ENCODE measurements at regions of chr12 and their contacts with region 1.

Region 1: GRCh38 chr12:109154451-109155438 is 38.4 kb downstream of the ACACB start:
- DNase-seq: peak; percentile 85
- H3K4me3 Mint-ChIP-seq: peak overlapping the region; percentile 90
- H3K27ac Mint-ChIP-seq: peak overlapping the region; percentile 81
- H3K4me1 Mint-ChIP-seq: peaks cover 17% of the 10 kb centered on the region
- H3K27me3 Mint-ChIP-seq: no peaks in the 10 kb centered on the region

Region 2: GRCh38 chr12:108731105-108731865 is 423.5 kb before region 1 on chr12 and contains the start of gene CORO1C:
- CTCF ChIA-PET with region 1: no interaction called
- intact Hi-C with region 1: loop called (anchors 1 kb)
- DNase-seq: peak; percentile 96
- H3K4me3 Mint-ChIP-seq: peak within 1 kb of the TSS; percentile 89
- H3K27ac Mint-ChIP-seq: peak within 1 kb of the TSS; percentile 87
- H3K4me1 Mint-ChIP-seq: peaks cover 29% of the 10 kb centered on the region
- H3K27me3 Mint-ChIP-seq: no peaks in the 10 kb centered on the region
- total RNA-seq, gene CORO1C: 36.4 to 43.7 TPM

Region 3: GRCh38 chr12:108856428-108857157 is 298.2 kb before region 1 on chr12:
- CTCF ChIA-PET with region 1: no interaction called
- intact Hi-C with region 1: loop called (anchors 1 kb)
- DNase-seq: peak; percentile 74
- H3K4me3 Mint-ChIP-seq: peak overlapping the region; percentile 92
- H3K27ac Mint-ChIP-seq: peak overlapping the region; percentile 75
- H3K4me1 Mint-ChIP-seq: peaks cover 40% of the 10 kb centered on the region
- H3K27me3 Mint-ChIP-seq: no peaks in the 10 kb centered on the region

Region 4: GRCh38 chr12:109052414-109053323 is 102.1 kb before region 1 on chr12 and contains the start of gene USP30:
- CTCF ChIA-PET with region 1: no interaction called
- intact Hi-C with region 1: loop called (anchors 2 kb)
- DNase-seq: peak; percentile 87
- H3K4me3 Mint-ChIP-seq: peak within 1 kb of the TSS; percentile 84
- H3K27ac Mint-ChIP-seq: peak within 1 kb of the TSS; percentile 96
- H3K4me1 Mint-ChIP-seq: peaks cover 8% of the 10 kb centered on the region
- H3K27me3 Mint-ChIP-seq: no peaks in the 10 kb centered on the region
- total RNA-seq, gene USP30: 11.0 to 11.5 TPM

Region 5: GRCh38 chr12:109110988-109111495 is 43.7 kb before region 1 on chr12:
- CTCF ChIA-PET with region 1: interaction called, 5 read pairs
- intact Hi-C with region 1: loop called (anchors 1 kb)
- DNase-seq: peak; percentile 50
- H3K4me3 Mint-ChIP-seq: peak overlapping the region; percentile 59
- H3K27ac Mint-ChIP-seq: peak overlapping the region; percentile 36
- H3K4me1 Mint-ChIP-seq: peaks cover 29% of the 10 kb centered on the region
- H3K27me3 Mint-ChIP-seq: no peaks in the 10 kb centered on the region

Region 6: GRCh38 chr12:109477185-109477962 is 322.6 kb after region 1 on chr12 and contains the starts of genes KCTD10 and UBE3B:
- CTCF ChIA-PET with region 1: no interaction called
- intact Hi-C with region 1: loop called (anchors 1 kb)
- DNase-seq: peak; percentile 87
- H3K4me3 Mint-ChIP-seq: peak within 1 kb of the TSS; percentile 97
- H3K27ac Mint-ChIP-seq: peak within 1 kb of the TSS; percentile 98
- H3K4me1 Mint-ChIP-seq: peaks cover 49% of the 10 kb centered on the region
- H3K27me3 Mint-ChIP-seq: no peaks in the 10 kb centered on the region
- total RNA-seq, gene KCTD10: 31.1 to 33.4 TPM
- total RNA-seq, gene UBE3B: 26.2 to 26.6 TPM

Measured in activated naive CD4-positive, alpha-beta T cell treated with anti-CD3 and anti-CD28 coated beads for 36 hours (primary cell).